Ovary (tissue), 10 donors: ENCODE measurements at regions of chr2 and their contacts with region 1.

Region 1: GRCh38 chr2:128062571-128062970 is 28.4 kb upstream of the UGGT1 start:
- DNase-seq: no peak
- H3K4me3 ChIP-seq: no peak overlapping the region
- H3K27ac ChIP-seq: no peak overlapping the region
- H3K4me1 ChIP-seq: no peaks in the 10 kb centered on the region
- H3K27me3 ChIP-seq: no peaks in the 10 kb centered on the region
- CTCF ChIP-seq: no peak
- EP300 ChIP-seq: no peak
- POLR2A ChIP-seq: no peak

Region 2: GRCh38 chr2:128245813-128246212 is 183.2 kb after region 1 on chr2:
- intact Hi-C with region 1: no loop called
- DNase-seq: no peak
- H3K4me3 ChIP-seq: no peak overlapping the region
- H3K27ac ChIP-seq: no peak overlapping the region
- H3K4me1 ChIP-seq: no peaks in the 10 kb centered on the region
- H3K27me3 ChIP-seq: no peaks in the 10 kb centered on the region
- CTCF ChIP-seq: no peak
- EP300 ChIP-seq: no peak
- POLR2A ChIP-seq: no peak

Region 3: GRCh38 chr2:129891372-129892320 is 1829.1 kb after region 1 on chr2:
- intact Hi-C with region 1: loop called in 1 of 4 experiments (anchors 5 kb)
- DNase-seq: no peak
- H3K4me3 ChIP-seq: no peak overlapping the region
- H3K27ac ChIP-seq: no peak overlapping the region
- H3K4me1 ChIP-seq: no peaks in the 10 kb centered on the region
- H3K27me3 ChIP-seq: no peaks in the 10 kb centered on the region
- CTCF ChIP-seq: no peak
- EP300 ChIP-seq: no peak
- POLR2A ChIP-seq: no peak